ENCODE measurements at regions of chr3 and their contacts with region 1.

Region 1: DNA sequence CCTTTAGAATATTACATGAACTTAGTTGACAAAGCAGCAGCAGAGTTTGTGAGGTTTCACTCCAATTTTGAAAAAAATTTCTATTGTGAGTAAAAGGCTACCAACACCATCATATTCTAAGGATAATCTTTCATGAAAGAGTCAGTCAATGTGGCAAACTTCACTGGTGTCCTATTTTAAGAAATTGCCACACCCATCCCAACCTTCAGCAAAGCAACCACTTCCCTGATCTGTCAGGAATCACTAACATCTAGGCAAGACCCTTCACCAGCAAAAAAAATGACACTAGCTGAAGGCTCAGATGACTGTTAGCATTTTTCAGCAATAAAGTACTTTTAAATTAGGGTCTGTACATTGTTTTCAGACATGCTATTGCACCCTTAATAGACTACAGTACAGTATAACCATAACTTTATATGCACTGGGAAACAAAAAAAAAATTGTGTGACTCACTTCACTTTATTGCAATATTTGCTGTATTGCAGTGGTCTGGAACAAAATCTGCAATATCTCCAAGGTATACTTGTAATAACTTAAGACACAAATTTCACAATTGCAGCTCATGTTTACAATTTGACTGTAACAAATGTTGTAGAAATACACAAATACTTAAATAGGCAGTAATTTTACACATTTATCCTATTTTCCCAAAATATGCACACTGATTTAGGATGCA is 38.9 kb upstream of the ALCAM start:
- DNase-seq: peak; percentile 83
- ATAC-seq: peak; percentile 96
- H3K4me3 ChIP-seq: no peak overlapping the region
- H3K27ac ChIP-seq: peak overlapping the region; percentile 66
- H3K4me1 ChIP-seq: peaks cover 18% of the 10 kb centered on the region
- H3K27me3 ChIP-seq: no peaks in the 10 kb centered on the region
- CTCF ChIP-seq: no peak

Region 2: DNA sequence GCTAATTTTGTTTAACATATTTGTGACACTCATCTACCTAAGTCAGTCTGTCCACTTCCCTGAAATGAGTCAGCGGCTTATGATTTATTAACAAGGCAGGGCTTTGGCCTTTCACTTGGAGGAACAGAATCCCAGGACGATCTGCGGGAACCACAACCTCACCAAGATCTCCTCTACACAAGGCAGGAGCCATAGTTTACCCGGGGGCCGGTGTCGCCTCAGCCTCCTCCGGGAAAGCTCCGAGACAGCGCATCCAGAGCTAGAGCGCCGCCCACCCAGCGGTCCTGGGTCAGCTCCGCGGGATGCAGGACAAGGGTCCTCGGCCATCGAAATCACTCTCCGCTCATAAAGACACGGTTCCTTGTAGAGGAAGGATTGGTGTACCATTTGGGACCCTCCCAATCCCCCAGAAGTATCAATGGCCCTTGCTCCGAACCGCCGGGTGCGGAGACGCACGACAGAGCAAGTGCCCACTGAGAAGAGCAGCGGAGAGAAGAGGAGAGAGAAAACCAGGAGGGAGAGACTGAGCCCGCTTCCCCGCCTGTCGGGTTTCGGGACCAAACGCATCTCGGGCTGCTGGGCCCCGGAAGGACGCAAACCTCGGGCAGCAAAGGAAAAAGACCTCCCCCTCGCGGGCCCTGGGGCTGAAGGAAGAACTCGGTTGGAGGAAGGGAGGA is 25.8 kb after region 1 on chr3:
- CTCF ChIA-PET with region 1: no interaction called
- POLR2A ChIA-PET with region 1: no interaction called
- intact Hi-C with region 1: loop called (anchors 2 kb)
- DNase-seq: peak; percentile 94
- ATAC-seq: peak; percentile 66
- H3K4me3 ChIP-seq: no peak overlapping the region
- H3K27ac ChIP-seq: peak overlapping the region; percentile 77
- H3K4me1 ChIP-seq: peaks cover 58% of the 10 kb centered on the region
- H3K27me3 ChIP-seq: no peaks in the 10 kb centered on the region
- CTCF ChIP-seq: no peak

Region 3: DNA sequence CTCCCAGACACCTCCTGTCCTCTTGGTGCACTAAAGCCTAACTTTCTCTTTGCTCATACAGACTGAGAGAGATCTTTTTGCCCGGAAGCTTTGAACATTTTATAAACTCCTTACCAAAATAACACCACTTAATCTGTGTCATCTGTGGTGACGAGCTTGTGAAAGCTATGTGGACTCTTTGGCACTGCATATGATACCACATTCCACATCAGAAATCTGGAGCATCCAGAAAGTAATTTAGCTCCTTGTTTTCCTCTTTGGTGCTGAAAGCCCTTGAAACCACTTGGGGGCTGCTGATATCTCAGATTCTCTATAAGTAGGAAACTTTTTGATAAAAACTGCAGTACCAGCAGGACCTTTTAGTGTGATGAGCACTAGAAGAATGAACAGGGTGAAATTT is 167.2 kb after region 1 on chr3:
- CTCF ChIA-PET with region 1: no interaction called
- POLR2A ChIA-PET with region 1: no interaction called
- intact Hi-C with region 1: no loop called
- DNase-seq: no peak
- ATAC-seq: no peak
- H3K4me3 ChIP-seq: no peak overlapping the region
- H3K27ac ChIP-seq: no peak overlapping the region
- H3K4me1 ChIP-seq: no peaks in the 10 kb centered on the region
- H3K27me3 ChIP-seq: no peaks in the 10 kb centered on the region
- CTCF ChIP-seq: no peak

Measured in PC-3 (cell line).